Left ventricle myocardium inferior (tissue), 1 donor: ENCODE measurements at regions of chr15 and their contacts with region 1.

Region 1: DNA sequence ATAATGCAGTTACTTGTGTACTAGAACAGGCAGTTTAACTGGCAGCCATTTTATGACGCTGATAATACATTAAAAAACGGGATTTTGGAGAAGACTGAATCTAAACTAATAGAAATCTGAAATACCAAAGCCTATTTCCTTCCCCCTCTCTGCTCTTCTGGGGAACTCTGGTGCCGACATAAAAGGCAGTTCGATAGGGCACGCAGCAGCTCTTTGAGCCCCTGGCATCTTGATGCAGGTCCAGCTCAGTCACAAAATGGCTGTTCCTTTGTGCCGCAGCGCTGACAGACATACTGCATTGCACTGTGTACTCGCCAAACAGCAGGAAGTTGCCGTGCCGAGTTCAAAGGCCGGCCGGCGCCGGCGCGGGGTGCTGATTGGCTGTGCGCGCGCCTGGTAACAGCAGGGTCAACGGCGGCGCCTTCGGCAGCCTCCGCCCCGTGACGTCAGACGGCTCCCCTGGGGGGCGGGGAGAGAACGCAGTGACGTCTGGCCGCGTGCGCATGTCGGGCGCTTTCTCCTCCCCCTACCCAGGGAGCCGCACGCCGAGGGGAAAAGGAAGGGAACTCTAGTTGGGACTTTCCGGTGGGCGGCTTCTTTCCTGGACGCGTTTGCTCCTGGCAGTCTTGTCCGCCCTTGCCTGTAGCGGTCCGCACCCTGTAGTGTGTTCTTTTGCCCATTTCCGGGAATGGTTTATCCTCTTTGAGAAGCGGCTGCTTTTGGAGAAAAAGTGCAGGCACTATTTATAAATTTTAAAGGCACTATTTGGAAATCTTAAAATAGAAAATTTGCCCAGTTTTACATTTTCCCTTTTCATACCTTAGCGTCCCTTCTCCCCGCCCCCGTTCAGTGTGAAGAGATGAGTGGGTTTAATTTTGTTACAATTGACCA is 4.1 kb downstream of the CHD2 start:
- DNase-seq: peak; percentile 99
- H3K4me3 ChIP-seq: peak overlapping the region; percentile 74
- H3K27ac ChIP-seq: peak overlapping the region; percentile 95
- H3K4me1 ChIP-seq: peaks cover 89% of the 10 kb centered on the region
- H3K27me3 ChIP-seq: no peaks in the 10 kb centered on the region
- CTCF ChIP-seq: no peak

Region 2: GRCh38 chr15:91611561-91612323 is 1292.4 kb before region 1 on chr15:
- intact Hi-C with region 1: no loop called
- DNase-seq: no peak
- H3K4me3 ChIP-seq: no peak overlapping the region
- H3K27ac ChIP-seq: no peak overlapping the region
- H3K4me1 ChIP-seq: no peaks in the 10 kb centered on the region
- H3K27me3 ChIP-seq: no peaks in the 10 kb centered on the region
- CTCF ChIP-seq: no peak

Region 3: DNA sequence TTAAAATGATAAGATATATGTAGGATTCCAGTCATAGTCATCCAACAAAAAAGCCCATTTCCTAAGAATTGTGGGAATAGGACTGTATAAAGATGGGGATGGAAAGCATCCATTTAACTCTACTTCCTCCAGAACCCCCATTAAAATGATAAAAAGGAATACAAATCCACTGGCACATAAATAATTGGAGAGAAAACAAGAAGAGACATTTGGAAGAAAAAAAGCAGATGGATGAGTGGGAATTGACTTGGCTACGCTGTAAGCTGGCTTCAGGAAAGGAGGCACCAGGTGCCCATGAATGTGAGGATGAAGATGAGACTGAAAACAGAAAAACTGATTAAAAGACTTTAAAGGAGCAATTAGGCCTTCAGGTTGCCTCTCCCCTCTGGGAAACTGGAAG is 418.7 kb before region 1 on chr15:
- intact Hi-C with region 1: no loop called
- DNase-seq: no peak
- H3K4me3 ChIP-seq: no peak overlapping the region
- H3K27ac ChIP-seq: no peak overlapping the region
- H3K4me1 ChIP-seq: no peaks in the 10 kb centered on the region
- H3K27me3 ChIP-seq: peaks cover 20% of the 10 kb centered on the region
- CTCF ChIP-seq: no peak

Region 4: GRCh38 chr15:92810418-92811138 is 93.6 kb before region 1 on chr15:
- intact Hi-C with region 1: loop called (anchors 5 kb)
- DNase-seq: peak; percentile 83
- H3K4me3 ChIP-seq: peak overlapping the region; percentile 75
- H3K27ac ChIP-seq: peak overlapping the region; percentile 100
- H3K4me1 ChIP-seq: peaks cover 36% of the 10 kb centered on the region
- H3K27me3 ChIP-seq: no peaks in the 10 kb centered on the region
- CTCF ChIP-seq: no peak

Region 5: GRCh38 chr15:92881802-92882696 is 22.1 kb before region 1 on chr15:
- intact Hi-C with region 1: loop called (anchors 2 kb)
- DNase-seq: peak; percentile 99
- H3K4me3 ChIP-seq: peak overlapping the region; percentile 88
- H3K27ac ChIP-seq: peak overlapping the region; percentile 99
- H3K4me1 ChIP-seq: peaks cover 68% of the 10 kb centered on the region
- H3K27me3 ChIP-seq: no peaks in the 10 kb centered on the region
- CTCF ChIP-seq: no peak

Region 6: GRCh38 chr15:92979011-92979701 is 75.0 kb after region 1 on chr15:
- intact Hi-C with region 1: no loop called
- DNase-seq: no peak
- H3K4me3 ChIP-seq: no peak overlapping the region
- H3K27ac ChIP-seq: no peak overlapping the region
- H3K4me1 ChIP-seq: peaks cover 44% of the 10 kb centered on the region
- H3K27me3 ChIP-seq: no peaks in the 10 kb centered on the region
- CTCF ChIP-seq: no peak